CD4-positive, alpha-beta T cell (primary cell): ENCODE measurements at regions of chr7 and their contacts with region 1.

Region 1: GRCh38 chr7:16982640-16983350 is 101.0 kb upstream of the AGR3 start:
- DNase-seq: peak in 10 of 14 experiments; percentile 1 to 68 (median 8)
- ATAC-seq: no peak
- H3K4me3 ChIP-seq: no peak overlapping the region
- H3K4me3 Mint-ChIP-seq: no peak overlapping the region
- H3K27ac ChIP-seq: no peak overlapping the region
- H3K27ac Mint-ChIP-seq: no peak overlapping the region
- H3K4me1 ChIP-seq: no peaks in the 10 kb centered on the region
- H3K4me1 Mint-ChIP-seq: no peaks in the 10 kb centered on the region
- H3K27me3 ChIP-seq: no peaks in the 10 kb centered on the region
- H3K27me3 Mint-ChIP-seq: peaks cover 5% of the 10 kb centered on the region
- CTCF ChIP-seq: peak; percentile 97

Region 2: DNA sequence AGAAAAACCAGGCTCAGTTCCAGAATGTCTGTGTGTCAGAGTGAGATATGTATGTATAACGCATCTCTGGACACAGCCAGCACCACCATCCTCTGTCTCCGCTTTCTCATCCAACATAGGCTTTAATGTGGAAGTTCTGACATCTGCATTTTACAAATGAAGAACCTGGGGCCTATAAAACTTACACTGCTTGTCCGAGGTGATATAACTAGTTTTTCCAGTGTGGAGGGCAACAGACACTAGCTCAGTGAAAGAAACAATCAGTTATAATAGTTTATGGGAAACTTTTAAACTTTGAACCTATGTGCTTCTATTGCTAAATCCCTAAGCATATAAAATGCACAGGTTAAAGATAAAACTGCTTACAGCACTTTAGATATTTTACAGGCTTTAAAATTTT is 770.2 kb before region 1 on chr7:
- CTCF ChIA-PET with region 1: no interaction called
- POLR2A ChIA-PET with region 1: no interaction called
- intact Hi-C with region 1: no loop called
- DNase-seq: no peak
- ATAC-seq: no peak
- H3K4me3 ChIP-seq: no peak overlapping the region
- H3K4me3 Mint-ChIP-seq: no peak overlapping the region
- H3K27ac ChIP-seq: no peak overlapping the region
- H3K27ac Mint-ChIP-seq: no peak overlapping the region
- H3K4me1 ChIP-seq: no peaks in the 10 kb centered on the region
- H3K4me1 Mint-ChIP-seq: no peaks in the 10 kb centered on the region
- H3K27me3 ChIP-seq: no peaks in the 10 kb centered on the region
- H3K27me3 Mint-ChIP-seq: no peaks in the 10 kb centered on the region
- CTCF ChIP-seq: no peak

Region 3: GRCh38 chr7:16951483-16952080 is 31.2 kb before region 1 on chr7:
- CTCF ChIA-PET with region 1: no interaction called
- POLR2A ChIA-PET with region 1: no interaction called
- intact Hi-C with region 1: no loop called
- DNase-seq: no peak
- ATAC-seq: no peak
- H3K4me3 ChIP-seq: no peak overlapping the region
- H3K4me3 Mint-ChIP-seq: no peak overlapping the region
- H3K27ac ChIP-seq: no peak overlapping the region
- H3K27ac Mint-ChIP-seq: no peak overlapping the region
- H3K4me1 ChIP-seq: no peaks in the 10 kb centered on the region
- H3K4me1 Mint-ChIP-seq: no peaks in the 10 kb centered on the region
- H3K27me3 ChIP-seq: no peaks in the 10 kb centered on the region
- H3K27me3 Mint-ChIP-seq: no peaks in the 10 kb centered on the region
- CTCF ChIP-seq: no peak

Region 4: DNA sequence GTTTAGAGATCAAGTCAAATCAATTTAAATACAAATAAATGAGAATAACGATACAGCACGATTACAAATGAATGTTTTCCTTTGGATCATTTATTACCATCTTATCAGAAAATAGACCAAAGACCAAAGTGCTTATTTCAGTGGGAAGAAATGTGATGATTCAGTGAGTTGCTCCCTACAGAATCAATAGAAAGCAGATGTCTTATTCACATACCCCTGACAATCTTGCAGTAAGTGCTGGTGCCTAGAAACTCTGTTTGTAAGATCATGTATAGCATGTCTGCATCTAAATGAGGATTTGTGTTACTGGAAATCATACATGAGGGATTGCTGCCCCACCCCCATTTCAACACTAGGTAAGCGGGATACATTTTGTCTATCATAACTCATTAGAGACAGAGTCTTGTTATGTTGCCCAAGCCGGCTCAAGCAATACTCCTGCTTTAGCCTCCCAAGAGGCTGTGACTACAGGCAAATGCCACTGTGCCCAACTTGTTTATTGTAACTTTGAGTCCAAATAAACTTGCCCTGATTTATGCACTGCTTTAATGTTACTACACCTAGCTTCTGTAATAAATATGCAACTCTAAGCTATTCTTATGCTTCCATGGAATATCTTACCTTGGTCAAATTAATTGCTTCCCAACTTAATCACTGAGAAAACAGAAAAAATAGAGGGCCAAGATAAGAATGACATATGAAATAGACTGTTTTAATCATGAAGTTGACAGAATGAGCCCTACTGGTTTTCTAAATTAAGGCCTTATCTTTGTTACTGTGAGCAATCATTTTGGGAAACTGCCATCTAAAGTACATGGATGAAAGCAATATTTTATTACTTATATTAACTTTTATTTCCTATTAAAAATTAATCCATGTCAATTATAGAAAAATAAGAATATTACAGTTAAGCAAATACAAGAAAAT is 398.2 kb after region 1 on chr7:
- CTCF ChIA-PET with region 1: no interaction called
- POLR2A ChIA-PET with region 1: no interaction called
- intact Hi-C with region 1: no loop called
- DNase-seq: no peak
- ATAC-seq: no peak
- H3K4me3 ChIP-seq: no peak overlapping the region
- H3K4me3 Mint-ChIP-seq: no peak overlapping the region
- H3K27ac ChIP-seq: no peak overlapping the region
- H3K27ac Mint-ChIP-seq: no peak overlapping the region
- H3K4me1 ChIP-seq: no peaks in the 10 kb centered on the region
- H3K4me1 Mint-ChIP-seq: no peaks in the 10 kb centered on the region
- H3K27me3 ChIP-seq: no peaks in the 10 kb centered on the region
- H3K27me3 Mint-ChIP-seq: no peaks in the 10 kb centered on the region
- CTCF ChIP-seq: no peak

Region 5: DNA sequence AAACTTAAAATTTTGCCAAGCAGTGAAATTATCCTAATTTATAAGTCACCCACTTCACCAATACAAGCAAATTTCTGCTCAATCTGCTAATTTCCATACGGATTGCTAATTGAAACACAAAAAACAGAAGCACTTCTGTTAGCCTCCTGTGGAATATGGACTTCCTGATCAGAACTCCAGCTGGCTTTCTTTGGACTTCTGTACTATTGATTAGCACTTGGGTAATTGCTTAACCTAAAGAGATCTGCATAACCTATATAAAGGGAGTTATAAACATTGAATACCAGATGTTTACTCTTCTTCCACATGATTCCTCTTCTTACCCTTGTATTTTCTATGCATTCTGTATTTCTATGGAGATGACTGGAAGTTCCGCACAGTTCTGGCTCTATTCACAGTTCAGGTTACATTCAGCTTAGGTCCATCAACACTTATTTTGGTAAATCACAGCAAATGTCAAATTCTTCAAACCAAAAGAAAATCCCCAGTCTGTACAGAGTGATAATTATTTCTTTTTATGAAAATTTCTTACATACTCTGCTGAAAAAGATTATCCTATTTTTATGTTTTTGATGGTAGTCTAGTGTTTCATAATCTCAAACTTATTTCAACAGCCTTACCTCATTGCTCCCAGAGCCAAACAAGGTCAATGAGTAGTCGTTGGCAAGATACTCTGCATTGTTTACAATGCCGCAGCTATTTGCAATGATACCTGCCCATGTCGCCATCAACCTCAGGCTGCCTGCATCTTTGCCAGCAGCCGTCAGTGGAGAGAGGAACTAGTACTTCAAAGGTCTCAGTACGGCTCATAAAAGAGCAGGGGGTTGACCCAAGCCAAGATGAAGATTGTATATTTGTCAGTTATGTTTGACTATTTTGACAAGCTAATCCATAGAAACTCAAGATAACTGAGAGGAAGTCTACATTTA is 541.3 kb after region 1 on chr7:
- CTCF ChIA-PET with region 1: no interaction called
- POLR2A ChIA-PET with region 1: no interaction called
- intact Hi-C with region 1: loop called in 1 of 2 experiments (anchors 10 kb)
- DNase-seq: no peak
- ATAC-seq: no peak
- H3K4me3 ChIP-seq: no peak overlapping the region
- H3K4me3 Mint-ChIP-seq: no peak overlapping the region
- H3K27ac ChIP-seq: no peak overlapping the region
- H3K27ac Mint-ChIP-seq: no peak overlapping the region
- H3K4me1 ChIP-seq: no peaks in the 10 kb centered on the region
- H3K4me1 Mint-ChIP-seq: no peaks in the 10 kb centered on the region
- H3K27me3 ChIP-seq: no peaks in the 10 kb centered on the region
- H3K27me3 Mint-ChIP-seq: no peaks in the 10 kb centered on the region
- CTCF ChIP-seq: no peak

Region 6: GRCh38 chr7:17530741-17531417 is 548.1 kb after region 1 on chr7:
- CTCF ChIA-PET with region 1: no interaction called
- POLR2A ChIA-PET with region 1: no interaction called
- intact Hi-C with region 1: loop called (anchors 5 to 10 kb)
- DNase-seq: peak in 3 of 14 experiments; percentile 13 to 21 (median 16)
- ATAC-seq: no peak
- H3K4me3 ChIP-seq: no peak overlapping the region
- H3K4me3 Mint-ChIP-seq: no peak overlapping the region
- H3K27ac ChIP-seq: no peak overlapping the region
- H3K27ac Mint-ChIP-seq: no peak overlapping the region
- H3K4me1 ChIP-seq: peaks cover 3% of the 10 kb centered on the region
- H3K4me1 Mint-ChIP-seq: no peaks in the 10 kb centered on the region
- H3K27me3 ChIP-seq: peaks cover 0 to 6% of the 10 kb centered on the region in 2 experiments
- H3K27me3 Mint-ChIP-seq: no peaks in the 10 kb centered on the region
- CTCF ChIP-seq: no peak

Region 7: DNA sequence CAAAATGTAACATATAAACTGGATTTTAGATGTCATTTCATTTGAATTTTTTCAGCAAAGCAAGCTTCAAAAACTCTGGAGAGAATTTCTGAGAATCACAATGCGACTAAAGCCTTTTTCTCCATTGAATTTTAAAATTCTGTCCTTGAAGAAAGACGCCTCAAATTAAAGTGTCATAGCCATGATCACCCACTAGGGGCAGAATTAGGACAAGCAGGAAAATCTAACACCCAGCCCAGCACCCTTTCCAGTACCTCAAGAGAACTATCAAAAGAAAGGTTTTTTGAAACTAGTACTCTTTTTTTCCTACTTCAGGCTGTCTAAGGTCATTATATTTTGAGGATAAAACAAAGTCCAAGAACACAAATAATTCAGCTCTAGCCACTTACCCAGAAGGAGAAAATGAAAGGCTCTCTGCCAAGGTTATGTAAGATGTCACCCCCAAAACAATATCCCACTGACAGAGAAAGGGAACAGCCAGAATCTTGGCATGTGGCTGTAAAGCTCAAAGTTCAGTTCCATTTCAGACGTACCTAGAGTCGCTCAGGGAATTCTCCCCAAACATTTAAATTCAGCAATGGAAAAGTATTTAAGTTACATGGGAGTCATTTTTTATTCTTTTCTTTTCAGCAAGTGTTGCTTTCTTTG is 658.1 kb after region 1 on chr7:
- CTCF ChIA-PET with region 1: no interaction called
- POLR2A ChIA-PET with region 1: no interaction called
- intact Hi-C with region 1: loop called (anchors 5 to 10 kb)
- DNase-seq: peak in 4 of 14 experiments; percentile 11 to 45 (median 32)
- ATAC-seq: peak; percentile 41
- H3K4me3 ChIP-seq: no peak overlapping the region
- H3K4me3 Mint-ChIP-seq: no peak overlapping the region
- H3K27ac ChIP-seq: no peak overlapping the region
- H3K27ac Mint-ChIP-seq: no peak overlapping the region
- H3K4me1 ChIP-seq: no peaks in the 10 kb centered on the region
- H3K4me1 Mint-ChIP-seq: no peaks in the 10 kb centered on the region
- H3K27me3 ChIP-seq: peaks cover 0 to 5% of the 10 kb centered on the region in 2 experiments
- H3K27me3 Mint-ChIP-seq: peaks cover 3% of the 10 kb centered on the region
- CTCF ChIP-seq: peak; percentile 80

Region 8: DNA sequence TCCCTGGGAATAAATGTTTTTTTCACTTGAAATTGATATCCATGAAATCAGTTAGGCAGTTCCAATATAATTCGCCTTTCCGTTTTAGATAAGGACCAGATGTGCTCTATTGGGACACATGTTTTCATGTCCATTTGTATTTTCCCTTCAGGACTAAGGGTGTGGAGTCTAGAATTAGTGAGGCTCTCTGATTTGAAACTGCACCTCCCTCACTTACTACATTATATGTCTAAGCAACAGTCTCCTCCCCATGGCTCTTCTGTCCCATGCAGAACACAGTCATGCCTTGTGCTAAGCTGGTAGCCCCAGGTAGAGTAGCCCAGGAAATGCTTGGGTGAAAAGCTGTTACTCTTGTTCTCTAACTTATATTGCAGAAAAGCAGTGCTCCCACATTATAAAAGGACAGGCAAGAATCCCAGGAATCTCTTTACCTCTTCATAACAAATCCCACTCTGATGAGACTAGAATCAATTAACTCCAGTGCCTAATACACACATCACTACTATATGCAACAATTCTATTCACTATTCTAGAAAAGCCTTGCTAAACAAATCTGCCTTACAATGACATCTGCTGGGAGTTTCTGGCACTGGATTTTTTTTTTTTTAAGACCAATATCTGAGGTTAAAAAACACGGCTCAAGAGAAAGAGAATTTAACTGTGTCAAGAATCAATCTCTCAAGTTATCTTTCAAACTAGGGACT is 663.6 kb after region 1 on chr7:
- CTCF ChIA-PET with region 1: interaction called, 3 read pairs
- POLR2A ChIA-PET with region 1: no interaction called
- intact Hi-C with region 1: loop called (anchors 5 to 10 kb)
- DNase-seq: no peak
- ATAC-seq: no peak
- H3K4me3 ChIP-seq: no peak overlapping the region
- H3K4me3 Mint-ChIP-seq: no peak overlapping the region
- H3K27ac ChIP-seq: no peak overlapping the region
- H3K27ac Mint-ChIP-seq: no peak overlapping the region
- H3K4me1 ChIP-seq: no peaks in the 10 kb centered on the region
- H3K4me1 Mint-ChIP-seq: no peaks in the 10 kb centered on the region
- H3K27me3 ChIP-seq: no peaks in the 10 kb centered on the region
- H3K27me3 Mint-ChIP-seq: peaks cover 13% of the 10 kb centered on the region
- CTCF ChIP-seq: no peak